Activated T-helper 2 cell treated with anti-CD3 and anti-CD28 coated beads, Interferon-gamma antibody, Interleukin-2, Interleukin-4, amounts not matched to agents 10 μg/mL and 5 μg/mL and 100 μg/mL, durations not matched to agents 14 hours and 24 hours and 36 hours (primary cell): ENCODE measurements at regions of chr16 and their contacts with region 1.

Region 1: DNA sequence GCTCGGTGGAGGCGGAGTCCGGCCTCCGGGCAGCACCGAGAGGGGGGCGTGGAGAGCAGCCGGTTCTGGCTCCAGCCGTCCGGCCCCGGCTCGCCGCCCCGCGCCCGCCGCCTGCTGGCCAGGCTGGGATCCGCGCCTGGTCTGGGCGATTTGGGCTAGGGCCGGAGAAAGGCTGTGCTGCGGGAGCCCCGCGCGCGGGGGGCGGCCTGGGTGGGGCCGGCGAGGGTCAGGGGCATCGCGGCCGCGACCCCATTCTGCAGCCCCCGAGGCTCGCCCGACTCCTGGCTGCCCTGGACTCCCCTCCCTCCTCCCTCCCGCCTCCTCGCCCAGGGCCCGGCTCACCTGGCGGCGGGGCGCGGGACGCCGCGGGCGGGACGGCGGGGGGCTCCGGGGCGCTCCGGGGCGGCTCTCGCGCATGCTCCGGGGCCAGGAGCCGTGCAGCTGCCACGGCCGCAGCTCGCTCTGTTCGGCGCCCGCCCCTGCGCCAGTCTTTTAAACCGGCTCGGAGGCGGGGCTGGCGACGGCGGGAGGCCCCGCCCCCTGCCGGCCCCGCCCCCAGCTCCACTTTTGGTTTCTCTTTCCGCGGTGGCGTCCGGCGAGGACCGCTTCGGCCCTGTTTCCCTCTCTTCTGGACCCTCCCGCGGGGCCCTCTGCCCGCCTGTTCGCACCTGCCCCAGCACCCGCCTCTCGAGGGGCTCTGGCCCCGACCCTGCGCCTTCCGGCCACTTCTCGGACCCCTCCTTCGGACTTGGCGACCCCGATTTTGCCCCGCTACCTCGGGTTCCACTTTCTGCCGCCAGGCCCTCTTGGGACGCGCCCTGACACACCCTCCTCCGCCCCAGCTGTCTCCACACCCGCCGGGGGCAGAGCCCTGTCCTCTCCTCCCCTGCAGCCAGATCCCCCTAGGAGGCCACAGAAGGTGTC is at the start of gene SOCS1:
- DNase-seq: peak; percentile 90
- H3K4me3 Mint-ChIP-seq: peak within 1 kb of the TSS; percentile 99
- H3K27ac Mint-ChIP-seq: peak within 1 kb of the TSS; percentile 97
- H3K4me1 Mint-ChIP-seq: peaks cover 38% of the 10 kb centered on the region
- H3K27me3 Mint-ChIP-seq: no peaks in the 10 kb centered on the region
- total RNA-seq, gene SOCS1: 217 and 219 TPM in 2 replicates

Region 2: DNA sequence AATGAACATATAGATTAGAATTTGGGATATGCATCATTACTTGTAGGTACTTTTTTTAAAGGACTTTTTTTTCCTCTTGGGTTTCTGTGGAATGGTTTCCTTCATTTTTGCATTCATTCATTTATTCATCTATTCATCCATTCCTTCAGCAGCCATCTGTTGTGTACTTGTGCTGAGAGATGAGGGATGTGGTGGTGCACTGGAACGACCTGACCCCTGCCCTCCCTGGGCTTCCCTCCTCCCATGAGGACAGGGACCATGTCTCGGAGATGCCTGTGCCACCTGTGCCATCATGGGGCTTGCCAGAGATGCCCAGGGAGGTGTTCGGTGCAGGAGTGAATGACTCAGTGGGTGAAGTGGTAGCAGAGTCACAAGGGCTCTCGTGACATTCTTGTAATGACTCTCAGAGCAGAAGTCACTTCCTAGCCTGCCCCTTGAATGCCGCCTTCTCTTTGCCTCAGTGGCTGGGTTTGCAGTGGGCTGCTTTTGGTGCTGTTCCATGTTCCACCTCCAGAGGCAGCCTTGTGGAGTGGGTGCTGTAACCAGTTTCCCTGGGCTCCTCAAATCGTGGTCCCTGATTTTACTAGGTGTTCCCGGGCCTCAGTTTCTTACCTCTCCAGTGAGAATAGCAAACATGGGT is 267.7 kb before region 1 on chr16:
- intact Hi-C with region 1: loop called (anchors 1 kb)
- DNase-seq: peak; percentile 63
- H3K4me3 Mint-ChIP-seq: peak overlapping the region; percentile 62
- H3K27ac Mint-ChIP-seq: peak overlapping the region; percentile 84
- H3K4me1 Mint-ChIP-seq: peaks cover 81% of the 10 kb centered on the region
- H3K27me3 Mint-ChIP-seq: no peaks in the 10 kb centered on the region

Region 3: DNA sequence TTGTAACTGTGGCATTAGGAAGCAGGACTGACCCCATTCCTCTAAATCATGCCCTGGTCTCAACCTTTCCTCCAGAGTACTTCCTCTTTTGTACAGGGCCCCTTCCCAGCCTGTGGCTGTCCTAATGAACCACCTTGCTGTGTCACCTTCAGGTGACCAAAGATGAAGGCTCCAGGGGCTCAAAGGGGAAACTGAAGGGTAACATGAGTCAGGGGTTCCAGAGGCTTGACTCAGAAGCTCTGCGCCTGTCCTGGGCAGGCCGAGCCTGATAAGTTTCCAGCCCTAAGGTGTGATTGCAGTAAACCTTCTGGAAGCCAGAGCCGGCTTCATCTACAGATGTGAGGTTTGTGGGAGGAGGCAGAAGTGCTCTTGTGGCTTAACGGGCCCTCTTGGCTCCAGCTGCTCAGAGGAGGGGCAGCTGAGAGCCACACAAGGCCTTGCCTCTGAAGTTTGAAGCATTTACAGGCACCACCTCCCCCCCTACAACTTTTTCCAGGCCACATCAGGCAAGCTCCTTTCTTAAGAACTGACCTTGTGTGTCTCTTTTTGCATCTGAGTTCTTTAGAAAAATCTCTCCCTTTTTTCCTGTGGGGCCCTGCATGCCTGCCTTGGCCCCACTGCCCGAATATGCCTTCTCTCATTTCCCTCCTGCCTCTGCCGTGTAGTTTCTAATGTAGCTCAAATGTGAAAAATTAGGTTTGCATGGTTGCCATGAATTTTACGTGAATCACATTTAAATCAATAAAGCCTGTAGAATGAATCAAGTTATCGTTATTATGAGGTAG is 161.7 kb before region 1 on chr16:
- intact Hi-C with region 1: loop called (anchors 1 kb)
- DNase-seq: peak; percentile 67
- H3K4me3 Mint-ChIP-seq: peak overlapping the region; percentile 50
- H3K27ac Mint-ChIP-seq: peak overlapping the region; percentile 98
- H3K4me1 Mint-ChIP-seq: peaks cover 75% of the 10 kb centered on the region
- H3K27me3 Mint-ChIP-seq: no peaks in the 10 kb centered on the region

Region 4: GRCh38 chr16:11133344-11133943 is 122.6 kb before region 1 on chr16:
- intact Hi-C with region 1: no loop called
- DNase-seq: peak; percentile 20
- H3K4me3 Mint-ChIP-seq: no peak overlapping the region
- H3K27ac Mint-ChIP-seq: peak overlapping the region; percentile 92
- H3K4me1 Mint-ChIP-seq: peaks cover 83% of the 10 kb centered on the region
- H3K27me3 Mint-ChIP-seq: no peaks in the 10 kb centered on the region

Region 5: DNA sequence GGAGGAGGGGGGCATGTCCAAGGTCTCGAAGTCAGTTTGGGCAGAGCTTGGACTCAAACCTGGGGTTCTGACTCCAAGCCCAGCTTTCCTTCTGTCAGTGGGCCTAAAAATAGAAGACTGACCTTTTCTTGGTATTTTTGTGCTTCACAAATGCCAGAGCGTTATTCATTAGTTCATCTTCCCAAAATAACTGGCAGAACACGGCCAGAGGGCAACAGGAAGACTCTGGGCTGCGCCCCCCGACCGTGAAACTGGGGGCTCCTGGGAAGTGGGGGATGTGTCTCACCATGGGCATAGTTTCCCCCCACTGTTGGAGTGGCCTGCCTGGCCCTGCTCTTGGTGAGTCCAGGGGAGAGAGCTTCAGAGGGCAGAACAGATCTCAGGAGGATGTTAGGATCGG is 94.0 kb before region 1 on chr16:
- intact Hi-C with region 1: loop called (anchors 2 kb)
- DNase-seq: no peak
- H3K4me3 Mint-ChIP-seq: no peak overlapping the region
- H3K27ac Mint-ChIP-seq: peak overlapping the region; percentile 90
- H3K4me1 Mint-ChIP-seq: peaks cover 65% of the 10 kb centered on the region
- H3K27me3 Mint-ChIP-seq: no peaks in the 10 kb centered on the region

Region 6: GRCh38 chr16:11224096-11224893 is 31.7 kb before region 1 on chr16:
- intact Hi-C with region 1: loop called (anchors 1 kb)
- DNase-seq: peak; percentile 70
- H3K4me3 Mint-ChIP-seq: peak overlapping the region; percentile 76
- H3K27ac Mint-ChIP-seq: peak overlapping the region; percentile 100
- H3K4me1 Mint-ChIP-seq: peaks cover 50% of the 10 kb centered on the region
- H3K27me3 Mint-ChIP-seq: no peaks in the 10 kb centered on the region

Region 7: GRCh38 chr16:11240636-11241473 is 15.1 kb before region 1 on chr16:
- intact Hi-C with region 1: no loop called
- DNase-seq: no peak
- H3K4me3 Mint-ChIP-seq: no peak overlapping the region
- H3K27ac Mint-ChIP-seq: peak overlapping the region; percentile 78
- H3K4me1 Mint-ChIP-seq: peaks cover 43% of the 10 kb centered on the region
- H3K27me3 Mint-ChIP-seq: no peaks in the 10 kb centered on the region

Region 8: GRCh38 chr16:11310997-11311561 is 55.1 kb after region 1 on chr16:
- intact Hi-C with region 1: loop called (anchors 2 kb)
- DNase-seq: peak; percentile 65
- H3K4me3 Mint-ChIP-seq: peak overlapping the region; percentile 30
- H3K27ac Mint-ChIP-seq: peak overlapping the region; percentile 80
- H3K4me1 Mint-ChIP-seq: peaks cover 38% of the 10 kb centered on the region
- H3K27me3 Mint-ChIP-seq: no peaks in the 10 kb centered on the region

Region 9: DNA sequence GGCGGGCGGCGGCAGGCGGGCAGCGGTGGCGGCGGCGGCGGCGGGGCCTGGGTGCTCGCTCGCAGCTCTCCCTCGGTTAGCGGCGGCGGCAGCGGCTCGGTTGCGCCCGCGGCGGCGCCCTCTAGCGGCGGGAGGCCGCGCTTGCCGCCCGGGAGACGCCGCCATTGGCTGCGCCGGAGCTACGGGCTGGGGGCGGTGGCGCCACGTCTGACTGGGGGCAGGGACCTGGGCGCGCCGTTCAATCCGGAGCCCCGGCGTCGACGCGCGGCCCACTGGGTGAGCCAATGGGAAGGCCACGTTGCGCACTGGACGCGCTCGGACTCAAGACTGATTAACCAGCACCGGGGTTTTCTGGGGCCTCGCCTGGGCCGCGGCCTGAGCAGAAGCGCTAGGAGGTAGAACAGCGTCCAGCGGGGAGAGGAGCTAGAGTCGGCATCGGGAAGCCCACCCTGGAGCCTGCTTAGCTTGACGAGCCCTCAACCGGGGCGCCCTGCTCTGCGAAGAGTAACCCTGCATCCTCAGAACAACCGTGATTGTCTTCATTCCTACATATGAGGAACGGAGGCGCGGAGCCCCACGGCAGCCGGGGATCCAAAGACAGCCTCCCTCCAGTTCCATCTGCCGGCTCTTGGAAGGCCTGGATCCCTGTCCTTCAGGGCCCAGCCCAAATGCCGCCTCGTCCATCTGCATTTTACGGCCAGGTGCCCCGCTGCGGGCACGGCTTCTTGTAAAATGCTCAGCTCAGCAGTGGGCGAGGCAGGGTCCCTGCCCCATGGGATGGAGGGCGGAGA is 541.4 kb after region 1 on chr16 and contains the start of gene ZC3H7A:
- intact Hi-C with region 1: loop called (anchors 10 kb)
- DNase-seq: peak; percentile 94
- H3K4me3 Mint-ChIP-seq: peak within 1 kb of the TSS; percentile 93
- H3K27ac Mint-ChIP-seq: peak within 1 kb of the TSS; percentile 96
- H3K4me1 Mint-ChIP-seq: peaks cover 67% of the 10 kb centered on the region
- H3K27me3 Mint-ChIP-seq: no peaks in the 10 kb centered on the region
- total RNA-seq, gene ZC3H7A: 63.4 and 71.1 TPM in 2 replicates